ENCODE measurements at regions of chr3 and their contacts with region 1.

Region 1: DNA sequence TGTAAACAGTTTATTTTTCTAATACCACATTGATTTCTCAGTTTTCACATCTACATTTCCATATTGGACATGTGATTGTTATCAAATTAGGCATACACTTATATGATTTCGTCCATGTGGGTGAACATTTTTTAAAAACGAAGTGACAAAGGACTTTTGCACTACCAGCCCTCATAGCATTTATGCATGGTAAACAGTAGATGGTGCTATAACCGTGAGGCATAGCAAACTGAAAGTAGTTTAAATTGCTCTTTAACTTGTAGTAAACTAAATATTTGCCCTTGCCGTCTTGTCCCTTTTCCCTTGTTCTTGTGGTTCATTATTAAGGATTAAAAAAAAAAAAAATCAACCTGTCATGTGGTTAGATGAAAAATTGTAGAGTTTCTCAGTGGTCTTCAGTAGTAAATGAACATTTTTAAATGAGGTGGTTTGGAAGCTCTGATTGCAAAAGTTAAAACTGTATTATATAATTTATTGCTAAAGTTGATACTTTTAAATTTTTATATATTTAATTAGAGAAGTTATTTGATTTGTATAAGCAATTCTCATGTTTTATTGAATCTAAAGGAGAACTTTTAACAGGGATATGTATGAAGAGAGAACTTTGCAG is 24.0 kb downstream of the STX19 start:
- DNase-seq: peak in 7 of 9 donors; percentile 18 to 61 (median 51)
- ATAC-seq: peak; percentile 91
- H3K4me3 ChIP-seq: no peak overlapping the region
- H3K4me3 Mint-ChIP-seq: peak overlapping the region; percentile 8 to 82 (median 75)
- H3K27ac ChIP-seq: no peak overlapping the region
- H3K27ac Mint-ChIP-seq: peak overlapping the region in 4 of 9 donors; percentile 15 to 91 (median 67)
- H3K4me1 ChIP-seq: no peaks in the 10 kb centered on the region
- H3K4me1 Mint-ChIP-seq: peaks cover 0 to 7% (median 4%) of the 10 kb centered on the region in 7 donors
- H3K27me3 ChIP-seq: no peaks in the 10 kb centered on the region
- H3K27me3 Mint-ChIP-seq: no peaks in the 10 kb centered on the region

Region 2: DNA sequence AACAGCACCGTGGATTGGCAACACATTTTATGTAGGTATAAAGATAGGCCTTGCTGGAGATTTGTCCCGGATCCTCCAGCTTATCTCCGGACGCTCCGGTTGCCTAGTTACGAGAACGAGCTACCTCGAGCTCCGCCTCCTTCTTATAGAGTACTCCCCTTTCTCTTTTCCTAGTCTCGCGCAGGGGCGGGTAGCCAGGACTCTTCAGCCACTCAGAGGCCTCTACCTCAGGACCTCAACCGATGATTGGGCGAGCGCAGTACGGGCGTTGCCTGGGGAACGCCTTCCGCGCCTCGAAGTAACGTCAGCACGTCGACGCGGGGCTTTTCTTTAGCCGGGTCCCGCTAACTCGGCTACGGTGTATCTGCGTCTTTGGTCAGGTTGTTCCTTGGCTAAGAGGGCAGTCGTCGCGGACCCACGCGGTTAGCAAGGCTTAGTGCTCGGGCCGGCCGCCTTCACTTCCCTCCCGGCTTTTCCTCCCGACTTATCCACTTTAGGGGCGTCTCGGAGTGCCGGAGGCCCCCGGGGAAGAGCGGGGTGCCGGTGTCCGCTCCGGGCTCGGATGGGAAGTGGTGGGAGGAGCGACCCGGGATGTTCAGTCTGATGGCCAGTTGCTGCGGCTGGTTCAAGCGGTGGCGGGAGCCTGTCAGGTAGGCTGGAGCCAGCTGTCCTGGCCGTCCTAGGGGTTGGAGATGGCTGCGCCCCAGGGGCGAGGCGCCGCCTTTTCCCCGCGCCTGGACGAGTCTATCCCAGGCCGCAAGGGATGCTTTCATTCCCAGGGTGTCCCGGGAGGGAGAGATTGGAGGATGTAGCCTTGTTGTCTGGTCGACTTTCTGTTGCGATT is 24.4 kb before region 1 on chr3 and contains the start of gene ARL13B:
- CTCF ChIA-PET with region 1: interaction called, 5 read pairs
- POLR2A ChIA-PET with region 1: no interaction called
- intact Hi-C with region 1: loop called (anchors 1 kb)
- DNase-seq: peak; percentile 81 to 95 (median 91)
- ATAC-seq: peak; percentile 100
- H3K4me3 ChIP-seq: peak within 1 kb of the TSS; percentile 95
- H3K4me3 Mint-ChIP-seq: peak within 1 kb of the TSS; percentile 85 to 94 (median 88)
- H3K27ac ChIP-seq: peak within 1 kb of the TSS; percentile 86
- H3K27ac Mint-ChIP-seq: peak within 1 kb of the TSS; percentile 76 to 95 (median 89)
- H3K4me1 ChIP-seq: peaks cover 6% of the 10 kb centered on the region in 2 donors
- H3K4me1 Mint-ChIP-seq: peaks cover 6 to 38% (median 26%) of the 10 kb centered on the region in 7 donors
- H3K27me3 ChIP-seq: no peaks in the 10 kb centered on the region
- H3K27me3 Mint-ChIP-seq: peaks cover 0 to 4% (median 0%) of the 10 kb centered on the region in 5 donors
- total RNA-seq, gene ARL13B: 5.3 to 10.2 (median 7.0) TPM

Region 3: GRCh38 chr3:94062431-94063404 is 58.3 kb after region 1 on chr3 and contains the starts of genes DHFR2 and NSUN3:
- CTCF ChIA-PET with region 1: interaction called, 32 read pairs
- POLR2A ChIA-PET with region 1: interaction called, 6 read pairs
- intact Hi-C with region 1: loop called in 1 of 2 experiments (anchors 1 kb)
- DNase-seq: peak; percentile 70 to 94 (median 90)
- ATAC-seq: peak; percentile 90
- H3K4me3 ChIP-seq: peak within 1 kb of the TSS; percentile 71
- H3K4me3 Mint-ChIP-seq: peak within 1 kb of the TSS; percentile 93 to 100 (median 98)
- H3K27ac ChIP-seq: peak within 1 kb of the TSS; percentile 94
- H3K27ac Mint-ChIP-seq: peak within 1 kb of the TSS; percentile 98 to 100 (median 100)
- H3K4me1 ChIP-seq: peaks cover 18 to 20% of the 10 kb centered on the region in 2 donors
- H3K4me1 Mint-ChIP-seq: peaks cover 30 to 73% (median 59%) of the 10 kb centered on the region in 7 donors
- H3K27me3 ChIP-seq: no peaks in the 10 kb centered on the region
- H3K27me3 Mint-ChIP-seq: no peaks in the 10 kb centered on the region
- total RNA-seq, gene DHFR2: 1.5 to 17.9 (median 9.0) TPM
- total RNA-seq, gene NSUN3: 19.9 to 24.0 (median 20.5) TPM

Region 4: DNA sequence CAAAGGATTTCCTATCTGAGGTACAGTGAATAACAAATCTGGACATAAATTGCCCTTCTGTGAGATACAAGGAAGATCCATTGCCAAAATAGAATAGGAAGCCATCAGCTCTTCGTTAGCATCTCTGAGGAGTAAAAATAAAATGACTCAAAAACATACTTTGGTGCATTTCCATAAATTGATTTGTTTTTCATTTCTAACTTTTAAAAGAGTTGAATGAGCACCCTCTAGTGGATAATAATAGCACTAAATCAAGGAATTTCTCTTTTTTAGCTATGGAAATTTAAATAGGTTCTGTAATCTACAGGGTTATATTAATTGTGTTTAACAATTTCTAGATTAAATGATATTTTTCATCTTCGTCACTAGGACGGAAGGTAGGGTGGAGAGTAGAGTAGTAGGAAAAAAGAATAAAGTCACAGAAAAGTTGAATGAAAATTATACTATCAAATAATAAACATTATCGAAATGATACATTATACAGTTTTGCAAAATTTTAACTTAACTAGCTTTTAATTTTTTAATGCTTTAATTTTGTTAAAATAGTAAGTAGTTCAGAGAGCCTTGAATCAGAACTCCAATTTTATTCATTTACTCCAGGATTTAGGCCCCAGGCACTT is 64.9 kb after region 1 on chr3:
- CTCF ChIA-PET with region 1: interaction called, 32 read pairs
- POLR2A ChIA-PET with region 1: interaction called, 3 read pairs
- intact Hi-C with region 1: loop called (anchors 1 kb)
- DNase-seq: peak in 5 of 9 donors; percentile 20 to 45 (median 26)
- ATAC-seq: peak; percentile 61
- H3K4me3 ChIP-seq: no peak overlapping the region
- H3K4me3 Mint-ChIP-seq: no peak overlapping the region
- H3K27ac ChIP-seq: no peak overlapping the region
- H3K27ac Mint-ChIP-seq: peak overlapping the region in 4 of 9 donors; percentile 3 to 38 (median 10)
- H3K4me1 ChIP-seq: peaks cover 11 to 13% of the 10 kb centered on the region in 2 donors
- H3K4me1 Mint-ChIP-seq: peaks cover 43 to 85% (median 79%) of the 10 kb centered on the region in 7 donors
- H3K27me3 ChIP-seq: no peaks in the 10 kb centered on the region
- H3K27me3 Mint-ChIP-seq: no peaks in the 10 kb centered on the region

Region 5: DNA sequence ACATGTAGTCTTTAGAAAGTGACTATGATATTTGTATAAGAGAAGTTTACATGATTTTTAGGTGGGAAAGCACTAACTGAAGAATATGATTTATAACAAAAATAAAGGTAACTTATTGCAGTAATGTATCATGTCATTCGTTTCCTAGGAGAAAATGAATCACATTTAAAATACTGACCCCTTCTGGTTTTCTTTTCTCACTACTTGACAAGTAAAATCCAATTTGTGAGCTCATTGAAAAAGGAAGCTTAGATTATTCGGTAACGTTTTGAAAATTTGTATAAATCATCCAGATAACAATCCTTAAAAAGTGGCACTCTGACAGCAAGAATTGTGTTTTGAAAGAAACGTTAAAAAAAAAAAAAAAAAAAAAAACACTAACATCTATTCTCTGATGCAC is 97.4 kb after region 1 on chr3:
- CTCF ChIA-PET with region 1: no interaction called
- POLR2A ChIA-PET with region 1: no interaction called
- intact Hi-C with region 1: loop called (anchors 1 kb)
- DNase-seq: no peak
- ATAC-seq: no peak
- H3K4me3 ChIP-seq: no peak overlapping the region
- H3K4me3 Mint-ChIP-seq: no peak overlapping the region
- H3K27ac ChIP-seq: no peak overlapping the region
- H3K27ac Mint-ChIP-seq: no peak overlapping the region
- H3K4me1 ChIP-seq: no peaks in the 10 kb centered on the region
- H3K4me1 Mint-ChIP-seq: peaks cover 0 to 7% (median 2%) of the 10 kb centered on the region in 7 donors
- H3K27me3 ChIP-seq: no peaks in the 10 kb centered on the region
- H3K27me3 Mint-ChIP-seq: no peaks in the 10 kb centered on the region

Region 6: GRCh38 chr3:94249585-94249984 is 245.2 kb after region 1 on chr3:
- CTCF ChIA-PET with region 1: no interaction called
- POLR2A ChIA-PET with region 1: no interaction called
- intact Hi-C with region 1: loop called in 1 of 2 experiments (anchors 1 kb)
- DNase-seq: peak in 8 of 9 donors; percentile 16 to 65 (median 24)
- ATAC-seq: peak; percentile 75
- H3K4me3 ChIP-seq: no peak overlapping the region
- H3K4me3 Mint-ChIP-seq: peak overlapping the region in 1 of 10 donors; percentile 10
- H3K27ac ChIP-seq: no peak overlapping the region
- H3K27ac Mint-ChIP-seq: no peak overlapping the region
- H3K4me1 ChIP-seq: no peaks in the 10 kb centered on the region
- H3K4me1 Mint-ChIP-seq: peaks cover 0 to 3% (median 0%) of the 10 kb centered on the region in 7 donors
- H3K27me3 ChIP-seq: no peaks in the 10 kb centered on the region
- H3K27me3 Mint-ChIP-seq: peaks cover 0 to 29% (median 22%) of the 10 kb centered on the region in 5 donors

Region 7: DNA sequence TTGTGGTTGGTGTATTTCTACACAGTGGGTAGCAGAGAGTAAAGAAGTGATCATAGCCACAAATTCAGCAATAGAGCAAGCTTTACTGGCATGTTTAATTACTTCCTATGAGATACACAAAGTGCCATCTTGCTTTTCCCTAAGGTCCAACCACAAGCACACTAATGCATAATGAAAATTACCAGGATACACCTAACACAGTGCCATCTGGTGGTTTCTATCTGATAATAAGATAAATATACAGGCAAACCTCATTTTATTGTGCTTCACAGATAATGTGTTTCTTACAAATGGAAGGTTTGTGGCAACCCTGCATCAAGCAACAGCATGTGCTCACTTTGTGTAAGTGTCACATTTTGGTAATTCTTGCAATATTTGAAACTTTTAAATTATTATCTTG is 281.5 kb after region 1 on chr3:
- CTCF ChIA-PET with region 1: no interaction called
- POLR2A ChIA-PET with region 1: no interaction called
- intact Hi-C with region 1: loop called in 1 of 2 experiments (anchors 5 kb)
- DNase-seq: no peak
- ATAC-seq: no peak
- H3K4me3 ChIP-seq: no peak overlapping the region
- H3K4me3 Mint-ChIP-seq: no peak overlapping the region
- H3K27ac ChIP-seq: no peak overlapping the region
- H3K27ac Mint-ChIP-seq: no peak overlapping the region
- H3K4me1 ChIP-seq: no peaks in the 10 kb centered on the region
- H3K4me1 Mint-ChIP-seq: peaks cover 0 to 2% (median 0%) of the 10 kb centered on the region in 7 donors
- H3K27me3 ChIP-seq: no peaks in the 10 kb centered on the region
- H3K27me3 Mint-ChIP-seq: peaks cover 0 to 7% (median 0%) of the 10 kb centered on the region in 5 donors

Measured in naive thymus-derived CD4-positive, alpha-beta T cell (primary cell).